CD4-positive, alpha-beta memory T cell (primary cell): ENCODE measurements at regions of chr3 and their contacts with region 1.

Region 1: DNA sequence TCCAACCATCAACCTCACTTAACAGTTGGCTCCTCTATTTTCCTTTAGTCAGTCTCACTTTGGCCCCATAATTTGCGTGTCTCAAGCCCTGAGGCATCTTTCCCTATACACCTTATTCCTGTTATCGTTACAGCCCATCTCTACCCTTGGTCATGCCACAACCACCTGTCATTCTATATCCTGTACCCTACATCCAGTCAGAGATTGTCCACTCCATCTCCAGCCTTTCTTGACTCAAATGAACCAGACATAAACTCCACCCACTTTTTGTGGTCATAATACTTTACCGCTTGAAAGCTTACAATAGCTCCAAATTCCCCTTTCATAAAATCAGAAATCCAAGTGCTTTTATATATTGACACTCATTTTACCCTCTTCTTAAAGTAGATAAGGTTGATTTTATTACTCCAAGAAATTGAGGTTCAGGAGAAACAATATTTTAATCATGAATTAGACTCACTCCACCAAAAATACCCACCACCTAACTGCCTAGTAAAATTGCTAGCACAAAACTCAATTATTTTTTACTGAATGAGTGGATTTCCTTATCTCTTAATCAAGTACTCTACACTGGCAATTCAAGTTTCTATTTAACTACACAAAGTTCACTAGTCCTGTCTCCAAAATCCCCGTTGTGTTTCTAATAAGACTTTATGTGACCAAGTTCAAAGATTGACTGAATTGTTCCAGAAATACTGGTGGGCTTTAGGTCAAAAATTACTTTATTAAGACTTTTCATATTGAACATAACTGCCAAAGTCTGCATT is 9.1 kb downstream of the CCR4 start:
- DNase-seq: peak; percentile 45 to 66 (median 55)
- H3K4me3 ChIP-seq: no peak overlapping the region
- H3K4me3 Mint-ChIP-seq: peak overlapping the region in 7 of 8 donors; percentile 18 to 75 (median 64)
- H3K27ac ChIP-seq: peak overlapping the region; percentile 31
- H3K27ac Mint-ChIP-seq: peak overlapping the region; percentile 63 to 99 (median 92)
- H3K4me1 ChIP-seq: peaks cover 71% of the 10 kb centered on the region
- H3K4me1 Mint-ChIP-seq: peaks cover 35 to 66% (median 56%) of the 10 kb centered on the region in 4 donors
- H3K27me3 ChIP-seq: no peaks in the 10 kb centered on the region
- H3K27me3 Mint-ChIP-seq: no peaks in the 10 kb centered on the region

Region 2: DNA sequence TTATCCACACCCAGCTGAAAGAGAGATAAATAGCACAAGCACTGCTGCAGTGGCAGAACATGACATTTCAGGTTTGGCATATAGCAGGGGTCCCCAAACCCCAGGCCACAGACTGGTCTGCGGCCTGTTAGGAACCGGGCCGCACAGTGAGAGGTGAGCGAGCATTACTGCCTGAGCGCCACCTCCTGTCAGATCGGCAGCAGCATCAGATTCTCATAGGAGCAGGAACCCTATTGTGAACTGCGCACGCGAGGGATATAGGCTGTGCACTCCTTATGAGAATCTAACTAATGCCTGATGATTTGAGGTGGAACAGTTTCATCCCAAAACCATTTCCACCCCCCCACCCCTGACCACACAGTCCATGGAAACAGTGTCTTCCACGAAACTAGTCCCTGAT is 45.5 kb after region 1 on chr3:
- CTCF ChIA-PET with region 1: interaction called, 3 read pairs
- POLR2A ChIA-PET with region 1: interaction called, 21 read pairs
- intact Hi-C with region 1: no loop called
- DNase-seq: peak; percentile 27 to 61 (median 51)
- H3K4me3 ChIP-seq: no peak overlapping the region
- H3K4me3 Mint-ChIP-seq: peak overlapping the region in 7 of 8 donors; percentile 20 to 62 (median 40)
- H3K27ac ChIP-seq: peak overlapping the region; percentile 0
- H3K27ac Mint-ChIP-seq: peak overlapping the region; percentile 73 to 94 (median 86)
- H3K4me1 ChIP-seq: peaks cover 78% of the 10 kb centered on the region
- H3K4me1 Mint-ChIP-seq: peaks cover 41 to 81% (median 66%) of the 10 kb centered on the region in 4 donors
- H3K27me3 ChIP-seq: no peaks in the 10 kb centered on the region
- H3K27me3 Mint-ChIP-seq: no peaks in the 10 kb centered on the region

Region 3: DNA sequence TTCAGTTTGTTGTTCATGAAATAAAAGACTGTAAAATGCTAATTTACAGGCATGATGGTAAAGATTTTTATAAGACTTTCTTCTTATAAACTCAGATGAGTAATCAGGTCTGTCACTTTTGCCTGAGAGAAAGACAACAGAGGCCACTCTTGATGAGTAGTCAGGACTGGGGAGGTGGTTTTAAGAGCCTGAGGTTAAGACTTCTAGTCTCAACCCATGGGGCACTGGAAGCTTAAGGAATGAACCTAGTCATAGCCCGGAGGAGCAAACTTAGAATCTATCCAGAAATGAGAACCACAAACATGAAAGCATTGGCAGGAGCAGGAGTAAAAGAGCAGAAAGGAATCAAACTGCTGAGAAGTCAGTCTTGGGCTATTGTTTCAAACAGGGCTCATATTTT is 1832.5 kb after region 1 on chr3:
- CTCF ChIA-PET with region 1: no interaction called
- POLR2A ChIA-PET with region 1: no interaction called
- intact Hi-C with region 1: no loop called
- DNase-seq: no peak
- H3K4me3 ChIP-seq: no peak overlapping the region
- H3K4me3 Mint-ChIP-seq: no peak overlapping the region
- H3K27ac ChIP-seq: no peak overlapping the region
- H3K27ac Mint-ChIP-seq: no peak overlapping the region
- H3K4me1 ChIP-seq: no peaks in the 10 kb centered on the region
- H3K4me1 Mint-ChIP-seq: no peaks in the 10 kb centered on the region
- H3K27me3 ChIP-seq: no peaks in the 10 kb centered on the region
- H3K27me3 Mint-ChIP-seq: no peaks in the 10 kb centered on the region